GM13976 (cell line): ENCODE measurements at regions of chr5 and their contacts with region 1.

Region 1: DNA sequence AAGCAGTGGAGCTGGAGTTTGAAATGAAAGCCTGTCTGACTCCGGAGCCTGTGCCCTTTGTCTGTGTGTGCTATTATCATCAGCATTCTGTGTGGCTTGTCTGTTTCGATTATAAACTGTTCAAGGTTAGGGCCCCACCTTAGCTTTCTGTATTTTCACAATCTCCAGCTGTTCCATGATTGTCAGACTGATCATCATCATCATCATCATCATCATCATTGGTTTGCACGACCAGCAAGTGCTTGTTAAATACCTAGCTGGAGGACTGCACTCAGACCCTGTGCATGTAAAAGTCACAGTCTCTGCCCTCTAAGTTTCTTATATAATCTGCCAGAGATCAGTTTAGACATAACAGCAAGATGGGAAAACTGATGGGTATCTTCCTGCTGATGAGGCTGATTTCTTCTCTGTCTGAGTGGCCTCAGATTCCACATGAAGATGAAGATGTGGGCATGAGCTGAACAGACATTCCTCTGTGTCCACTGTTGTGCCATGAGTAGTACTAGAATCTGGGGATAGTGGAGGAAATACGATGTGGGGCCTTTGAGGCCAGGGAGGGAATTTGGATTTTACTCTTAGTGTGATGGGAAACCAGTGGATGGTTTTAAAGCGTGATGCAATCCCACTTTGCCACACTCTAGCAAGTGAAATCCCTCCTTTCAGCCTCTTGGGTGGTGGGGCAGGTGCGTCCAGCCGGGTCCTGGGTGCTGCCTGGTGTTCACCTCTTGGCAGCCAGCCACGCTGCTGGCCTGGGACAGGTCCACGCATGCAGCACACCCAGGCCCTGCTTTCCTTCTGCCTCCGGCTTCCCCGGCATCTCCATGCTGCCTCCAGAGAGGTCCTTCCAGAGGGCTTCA is 27.8 kb upstream of the SH3PXD2B start:
- DNase-seq: no peak
- CTCF ChIP-seq: no peak

Region 2: GRCh38 chr5:171484460-171484899 is 997.6 kb before region 1 on chr5:
- in situ Hi-C with region 1: no loop called
- DNase-seq: peak; percentile 78
- CTCF ChIP-seq: peak; percentile 71

Region 3: GRCh38 chr5:172006321-172007174 is 475.5 kb before region 1 on chr5 and contains the start of gene FBXW11:
- in situ Hi-C with region 1: no loop called
- DNase-seq: peak; percentile 95
- CTCF ChIP-seq: no peak

Region 4: GRCh38 chr5:172697123-172698121 is 215.3 kb after region 1 on chr5:
- in situ Hi-C with region 1: loop called (anchors 5 kb)
- DNase-seq: peak; percentile 91
- CTCF ChIP-seq: peak; percentile 91

Region 5: DNA sequence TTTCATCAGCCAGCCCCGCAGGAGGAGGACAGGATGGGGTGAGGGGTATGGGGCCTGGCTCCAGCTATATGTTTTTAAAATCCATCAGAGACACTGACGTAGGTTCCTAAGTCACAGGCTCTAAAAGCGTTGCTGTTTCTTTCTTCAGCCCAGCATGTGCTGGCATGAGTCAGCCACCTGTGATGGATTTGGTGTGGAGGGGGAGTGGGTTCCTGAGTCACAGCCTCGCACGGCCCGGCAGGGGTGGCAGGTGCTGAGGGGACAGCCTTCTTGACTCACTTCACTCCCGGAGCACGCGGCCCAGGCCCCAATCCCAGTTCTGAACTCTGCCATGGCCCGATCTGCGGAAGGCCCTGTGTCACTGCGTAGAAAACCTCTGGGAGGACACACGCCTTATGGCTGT is 438.4 kb after region 1 on chr5:
- in situ Hi-C with region 1: loop called (anchors 10 kb)
- DNase-seq: no peak
- CTCF ChIP-seq: no peak